ENCODE measurements at regions of chr4 and their contacts with region 1.

Region 1: DNA sequence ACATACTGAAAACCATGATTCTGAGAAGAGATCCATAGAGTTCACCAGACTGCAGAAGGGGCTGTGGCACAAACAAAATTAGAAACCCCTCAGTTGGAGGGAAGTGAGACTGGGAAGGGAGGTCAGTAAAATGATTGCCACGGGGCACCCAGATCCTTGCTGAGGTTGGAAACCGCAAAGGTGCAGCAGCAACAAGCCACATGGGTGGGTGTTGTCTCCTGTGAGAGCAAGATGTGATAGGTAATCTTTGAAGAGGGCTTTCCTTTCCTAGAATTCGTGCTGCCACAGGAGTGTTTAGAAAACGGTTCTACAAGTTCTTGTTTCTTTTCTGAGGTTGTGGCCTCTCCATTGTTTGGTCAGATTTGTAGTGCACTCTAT is 85.5 kb downstream of the NFKB1 start:
- DNase-seq: peak; percentile 61
- H3K4me3 Mint-ChIP-seq: peak overlapping the region; percentile 47
- H3K27ac Mint-ChIP-seq: peak overlapping the region; percentile 60
- H3K4me1 Mint-ChIP-seq: peaks cover 86% of the 10 kb centered on the region
- H3K27me3 Mint-ChIP-seq: no peaks in the 10 kb centered on the region

Region 2: DNA sequence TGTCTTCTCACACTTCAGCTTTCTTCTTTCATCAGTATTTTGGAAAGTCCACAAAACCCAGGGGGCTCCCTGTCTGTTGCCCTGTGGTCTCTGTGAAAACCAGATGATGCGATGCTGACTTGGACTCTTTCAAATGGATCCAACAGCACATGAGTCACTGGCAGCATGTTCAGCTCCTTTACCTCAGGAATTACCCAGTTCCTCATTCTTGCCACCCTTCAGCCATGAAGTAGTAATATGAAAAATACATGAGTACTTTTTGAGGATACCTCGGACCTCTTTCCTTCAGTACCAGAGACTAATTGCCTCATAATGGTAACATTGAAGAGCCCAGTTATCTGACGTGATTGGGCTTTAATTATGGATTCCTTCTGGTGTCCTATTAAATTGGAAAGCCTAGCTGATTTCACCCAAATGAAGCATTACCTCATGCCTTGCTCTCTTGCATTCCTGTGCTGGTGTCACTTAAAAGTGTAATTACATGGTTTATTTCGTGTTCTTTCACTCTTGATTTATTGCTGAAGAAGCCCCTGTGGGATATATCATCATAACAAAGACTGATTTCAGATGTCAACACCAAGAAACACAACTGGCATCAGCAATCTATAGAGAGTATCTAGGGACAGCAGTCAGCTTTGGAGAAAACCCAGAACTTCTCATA is 22.1 kb before region 1 on chr4:
- intact Hi-C with region 1: no loop called
- DNase-seq: no peak
- H3K4me3 Mint-ChIP-seq: no peak overlapping the region
- H3K27ac Mint-ChIP-seq: peak overlapping the region; percentile 69
- H3K4me1 Mint-ChIP-seq: peaks cover 79% of the 10 kb centered on the region
- H3K27me3 Mint-ChIP-seq: no peaks in the 10 kb centered on the region

Region 3: GRCh38 chr4:102612824-102613366 is 26.3 kb after region 1 on chr4:
- intact Hi-C with region 1: loop called (anchors 1 kb)
- DNase-seq: peak; percentile 41
- H3K4me3 Mint-ChIP-seq: peak overlapping the region; percentile 70
- H3K27ac Mint-ChIP-seq: peak overlapping the region; percentile 95
- H3K4me1 Mint-ChIP-seq: peaks cover 83% of the 10 kb centered on the region
- H3K27me3 Mint-ChIP-seq: no peaks in the 10 kb centered on the region

Region 4: GRCh38 chr4:102637391-102637790 is 50.8 kb after region 1 on chr4:
- intact Hi-C with region 1: no loop called
- DNase-seq: no peak
- H3K4me3 Mint-ChIP-seq: no peak overlapping the region
- H3K27ac Mint-ChIP-seq: no peak overlapping the region
- H3K4me1 Mint-ChIP-seq: peaks cover 8% of the 10 kb centered on the region
- H3K27me3 Mint-ChIP-seq: no peaks in the 10 kb centered on the region

Measured in activated T-helper 1 cell treated with anti-CD3 and anti-CD28 coated beads, Interleukin-12 subunit alpha, Interleukin-12 subunit beta, Interleukin-2, Interleukin-4 antibody, amounts not matched to agents 30 ng/mL and 10 ng/mL and 1 ng/mL, durations not matched to agents 14 hours and 24 hours and 36 hours (primary cell).